ENCODE measurements at regions of chr15 and their contacts with region 1.

Region 1: GRCh38 chr15:90291679-90292356 is 26.3 kb downstream of the NGRN start:
- DNase-seq: peak; percentile 52
- ATAC-seq: no peak
- H3K4me3 Mint-ChIP-seq: no peak overlapping the region
- H3K27ac Mint-ChIP-seq: no peak overlapping the region
- H3K4me1 Mint-ChIP-seq: peaks cover 3% of the 10 kb centered on the region
- H3K27me3 Mint-ChIP-seq: peaks cover 4% of the 10 kb centered on the region
- CTCF ChIP-seq: no peak

Region 2: GRCh38 chr15:90227816-90228772 is 63.7 kb before region 1 on chr15:
- CTCF ChIA-PET with region 1: no interaction called
- POLR2A ChIA-PET with region 1: no interaction called
- intact Hi-C with region 1: no loop called
- DNase-seq: no peak
- ATAC-seq: no peak
- H3K4me3 Mint-ChIP-seq: no peak overlapping the region
- H3K27ac Mint-ChIP-seq: peak overlapping the region; percentile 94
- H3K4me1 Mint-ChIP-seq: peaks cover 37% of the 10 kb centered on the region
- H3K27me3 Mint-ChIP-seq: no peaks in the 10 kb centered on the region
- CTCF ChIP-seq: no peak

Region 3: GRCh38 chr15:90309020-90309419 is 17.2 kb after region 1 on chr15:
- CTCF ChIA-PET with region 1: interaction called, 79 read pairs
- POLR2A ChIA-PET with region 1: interaction called, 3 read pairs
- intact Hi-C with region 1: no loop called
- DNase-seq: no peak
- ATAC-seq: no peak
- H3K4me3 Mint-ChIP-seq: no peak overlapping the region
- H3K27ac Mint-ChIP-seq: no peak overlapping the region
- H3K4me1 Mint-ChIP-seq: peaks cover 46% of the 10 kb centered on the region
- H3K27me3 Mint-ChIP-seq: no peaks in the 10 kb centered on the region
- CTCF ChIP-seq: no peak